ENCODE measurements at regions of chr18 and their contacts with region 1.

Region 1: GRCh38 chr18:58687871-58688308 is 16.6 kb downstream of the MALT1 start:
- DNase-seq: peak in 8 of 9 donors; percentile 66 to 91 (median 86)
- ATAC-seq: peak; percentile 97
- H3K4me3 ChIP-seq: peak overlapping the region; percentile 15
- H3K4me3 Mint-ChIP-seq: peak overlapping the region; percentile 47 to 93 (median 87)
- H3K27ac ChIP-seq: peak overlapping the region; percentile 68
- H3K27ac Mint-ChIP-seq: peak overlapping the region in 8 of 9 donors; percentile 92 to 99 (median 96)
- H3K4me1 ChIP-seq: peaks cover 35 to 72% of the 10 kb centered on the region in 2 donors
- H3K4me1 Mint-ChIP-seq: peaks cover 43 to 89% (median 82%) of the 10 kb centered on the region in 7 donors
- H3K27me3 ChIP-seq: no peaks in the 10 kb centered on the region
- H3K27me3 Mint-ChIP-seq: no peaks in the 10 kb centered on the region

Region 2: GRCh38 chr18:58541789-58542425 is 146.0 kb before region 1 on chr18:
- CTCF ChIA-PET with region 1: no interaction called
- POLR2A ChIA-PET with region 1: no interaction called
- intact Hi-C with region 1: loop called in 1 of 2 experiments (anchors 2 kb)
- DNase-seq: peak in 1 of 9 donors; percentile 52
- ATAC-seq: peak; percentile 79
- H3K4me3 ChIP-seq: no peak overlapping the region
- H3K4me3 Mint-ChIP-seq: peak overlapping the region in 1 of 10 donors; percentile 23
- H3K27ac ChIP-seq: no peak overlapping the region
- H3K27ac Mint-ChIP-seq: peak overlapping the region in 1 of 9 donors; percentile 29
- H3K4me1 ChIP-seq: peaks cover 7 to 14% of the 10 kb centered on the region in 2 donors
- H3K4me1 Mint-ChIP-seq: peaks cover 23 to 59% (median 40%) of the 10 kb centered on the region in 7 donors
- H3K27me3 ChIP-seq: no peaks in the 10 kb centered on the region
- H3K27me3 Mint-ChIP-seq: peaks cover 0 to 41% (median 0%) of the 10 kb centered on the region in 5 donors

Region 3: GRCh38 chr18:58649966-58650816 is 37.7 kb before region 1 on chr18:
- CTCF ChIA-PET with region 1: no interaction called
- POLR2A ChIA-PET with region 1: interaction called, 3 read pairs
- intact Hi-C with region 1: loop called in 1 of 2 experiments (anchors 1 kb)
- DNase-seq: peak in 7 of 9 donors; percentile 21 to 65 (median 53)
- ATAC-seq: peak; percentile 87
- H3K4me3 ChIP-seq: no peak overlapping the region
- H3K4me3 Mint-ChIP-seq: peak overlapping the region; percentile 8 to 77 (median 60)
- H3K27ac ChIP-seq: no peak overlapping the region
- H3K27ac Mint-ChIP-seq: peak overlapping the region in 8 of 9 donors; percentile 17 to 88 (median 47)
- H3K4me1 ChIP-seq: peaks cover 15 to 27% of the 10 kb centered on the region in 2 donors
- H3K4me1 Mint-ChIP-seq: peaks cover 28 to 72% (median 58%) of the 10 kb centered on the region in 7 donors
- H3K27me3 ChIP-seq: no peaks in the 10 kb centered on the region
- H3K27me3 Mint-ChIP-seq: peaks cover 0 to 6% (median 0%) of the 10 kb centered on the region in 5 donors

Region 4: GRCh38 chr18:58661423-58661822 is 26.5 kb before region 1 on chr18:
- CTCF ChIA-PET with region 1: interaction called, 3 read pairs
- POLR2A ChIA-PET with region 1: interaction called, 8 read pairs
- intact Hi-C with region 1: loop called (anchors 1 kb)
- DNase-seq: no peak
- ATAC-seq: no peak
- H3K4me3 ChIP-seq: no peak overlapping the region
- H3K4me3 Mint-ChIP-seq: no peak overlapping the region
- H3K27ac ChIP-seq: no peak overlapping the region
- H3K27ac Mint-ChIP-seq: peak overlapping the region in 1 of 9 donors; percentile 22
- H3K4me1 ChIP-seq: peaks cover 31 to 33% of the 10 kb centered on the region in 2 donors
- H3K4me1 Mint-ChIP-seq: peaks cover 38 to 68% (median 62%) of the 10 kb centered on the region in 7 donors
- H3K27me3 ChIP-seq: no peaks in the 10 kb centered on the region
- H3K27me3 Mint-ChIP-seq: no peaks in the 10 kb centered on the region

Region 5: GRCh38 chr18:58699551-58699950 is 11.7 kb after region 1 on chr18:
- CTCF ChIA-PET with region 1: interaction called, 3 read pairs
- POLR2A ChIA-PET with region 1: interaction called, 5 read pairs
- intact Hi-C with region 1: loop called (anchors 1 kb)
- DNase-seq: no peak
- ATAC-seq: no peak
- H3K4me3 ChIP-seq: no peak overlapping the region
- H3K4me3 Mint-ChIP-seq: no peak overlapping the region
- H3K27ac ChIP-seq: no peak overlapping the region
- H3K27ac Mint-ChIP-seq: no peak overlapping the region
- H3K4me1 ChIP-seq: peaks cover 9 to 39% of the 10 kb centered on the region in 2 donors
- H3K4me1 Mint-ChIP-seq: peaks cover 20 to 54% (median 28%) of the 10 kb centered on the region in 7 donors
- H3K27me3 ChIP-seq: no peaks in the 10 kb centered on the region
- H3K27me3 Mint-ChIP-seq: no peaks in the 10 kb centered on the region

Region 6: GRCh38 chr18:58716060-58716756 is 28.3 kb after region 1 on chr18:
- CTCF ChIA-PET with region 1: interaction called, 4 read pairs
- POLR2A ChIA-PET with region 1: interaction called, 4 read pairs
- intact Hi-C with region 1: loop called (anchors 1 to 2 kb)
- DNase-seq: peak in 7 of 9 donors; percentile 19 to 59 (median 44)
- ATAC-seq: peak; percentile 86
- H3K4me3 ChIP-seq: no peak overlapping the region
- H3K4me3 Mint-ChIP-seq: peak overlapping the region; percentile 63 to 92 (median 80)
- H3K27ac ChIP-seq: peak overlapping the region; percentile 44
- H3K27ac Mint-ChIP-seq: peak overlapping the region; percentile 77 to 94 (median 87)
- H3K4me1 ChIP-seq: peaks cover 25 to 32% of the 10 kb centered on the region in 2 donors
- H3K4me1 Mint-ChIP-seq: peaks cover 38 to 92% (median 76%) of the 10 kb centered on the region in 7 donors
- H3K27me3 ChIP-seq: no peaks in the 10 kb centered on the region
- H3K27me3 Mint-ChIP-seq: no peaks in the 10 kb centered on the region

Measured in naive thymus-derived CD4-positive, alpha-beta T cell (primary cell).